ENCODE measurements at regions of chr1 and their contacts with region 1.

Region 1: GRCh38 chr1:91876040-91876470 is 9.9 kb downstream of the TGFBR3 start:
- DNase-seq: peak; percentile 68
- ATAC-seq: peak; percentile 83
- H3K4me3 Mint-ChIP-seq: no peak overlapping the region
- H3K27ac Mint-ChIP-seq: peak overlapping the region; percentile 29
- H3K4me1 Mint-ChIP-seq: peaks cover 79% of the 10 kb centered on the region
- H3K27me3 Mint-ChIP-seq: no peaks in the 10 kb centered on the region

Region 2: GRCh38 chr1:91712981-91713841 is 162.8 kb before region 1 on chr1:
- CTCF ChIA-PET with region 1: interaction called, 3 read pairs
- POLR2A ChIA-PET with region 1: no interaction called
- intact Hi-C with region 1: loop called (anchors 1 to 2 kb)
- DNase-seq: peak; percentile 75
- ATAC-seq: peak; percentile 91
- H3K4me3 Mint-ChIP-seq: peak overlapping the region; percentile 6
- H3K27ac Mint-ChIP-seq: peak overlapping the region; percentile 72
- H3K4me1 Mint-ChIP-seq: peaks cover 30% of the 10 kb centered on the region
- H3K27me3 Mint-ChIP-seq: no peaks in the 10 kb centered on the region

Region 3: GRCh38 chr1:91754348-91754747 is 121.7 kb before region 1 on chr1:
- CTCF ChIA-PET with region 1: no interaction called
- POLR2A ChIA-PET with region 1: no interaction called
- intact Hi-C with region 1: loop called (anchors 1 kb)
- DNase-seq: peak; percentile 75
- ATAC-seq: peak; percentile 87
- H3K4me3 Mint-ChIP-seq: peak overlapping the region; percentile 21
- H3K27ac Mint-ChIP-seq: peak overlapping the region; percentile 82
- H3K4me1 Mint-ChIP-seq: peaks cover 43% of the 10 kb centered on the region
- H3K27me3 Mint-ChIP-seq: peaks cover 7% of the 10 kb centered on the region

Region 4: GRCh38 chr1:92476071-92476631 is 600.1 kb after region 1 on chr1:
- CTCF ChIA-PET with region 1: no interaction called
- POLR2A ChIA-PET with region 1: no interaction called
- intact Hi-C with region 1: no loop called
- DNase-seq: peak; percentile 84
- ATAC-seq: peak; percentile 57
- H3K4me3 Mint-ChIP-seq: peak overlapping the region; percentile 37
- H3K27ac Mint-ChIP-seq: peak overlapping the region; percentile 92
- H3K4me1 Mint-ChIP-seq: peaks cover 85% of the 10 kb centered on the region
- H3K27me3 Mint-ChIP-seq: no peaks in the 10 kb centered on the region

Region 5: DNA sequence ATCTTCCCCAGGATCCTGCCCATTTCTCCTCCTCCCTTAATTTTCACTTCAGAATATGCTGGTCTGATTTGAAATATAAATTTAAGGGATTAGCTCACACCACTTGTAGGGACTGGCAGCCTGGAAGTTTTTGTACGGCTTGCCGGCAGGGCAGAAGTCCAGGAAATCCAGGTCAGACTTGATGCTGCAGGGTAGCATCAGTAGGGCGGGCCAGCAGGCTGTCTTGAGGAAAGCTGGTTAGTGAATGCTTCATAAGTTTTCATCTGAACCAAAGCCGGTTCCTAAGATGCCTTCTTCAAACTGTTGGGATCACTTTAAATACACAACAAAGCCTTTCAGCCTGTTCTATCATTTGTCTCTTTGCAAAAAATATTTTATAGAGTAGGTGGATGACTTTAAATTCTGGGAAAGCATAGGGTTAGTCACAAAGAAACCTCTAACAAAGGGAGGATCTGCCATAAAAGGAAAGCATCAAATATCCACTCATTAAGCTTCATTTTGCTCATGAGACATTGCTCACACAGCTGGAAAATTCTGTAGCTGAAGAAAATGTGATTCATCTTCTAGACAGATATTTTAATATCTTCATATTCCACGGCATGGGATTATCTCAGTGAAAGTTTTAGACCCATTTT is 701.3 kb after region 1 on chr1:
- CTCF ChIA-PET with region 1: no interaction called
- POLR2A ChIA-PET with region 1: no interaction called
- intact Hi-C with region 1: loop called in 1 of 2 experiments (anchors 2 kb)
- DNase-seq: peak; percentile 42
- ATAC-seq: peak; percentile 62
- H3K4me3 Mint-ChIP-seq: peak overlapping the region; percentile 88
- H3K27ac Mint-ChIP-seq: peak overlapping the region; percentile 89
- H3K4me1 Mint-ChIP-seq: peaks cover 61% of the 10 kb centered on the region
- H3K27me3 Mint-ChIP-seq: no peaks in the 10 kb centered on the region